SK-N-SH (cell line): ENCODE measurements at regions of chr3 and their contacts with region 1.

Region 1: GRCh38 chr3:197186887-197187588 is 111.4 kb downstream of the DLG1 start:
- DNase-seq: peak; percentile 55
- H3K4me3 ChIP-seq: no peak overlapping the region; a peak in 1 of 4 replicates
- H3K27ac ChIP-seq: peak overlapping the region in 1 of 2 experiments; percentile 80; a peak in 2 of 4 replicates
- H3K4me1 ChIP-seq: peaks cover 16 to 22% of the 10 kb centered on the region in 2 experiments; a peak in 3 of 4 replicates
- H3K27me3 ChIP-seq: no peaks in the 10 kb centered on the region
- CTCF ChIP-seq: peak; percentile 95
- EP300 ChIP-seq: no peak
- RAD21 ChIP-seq: peak; percentile 94

Region 2: DNA sequence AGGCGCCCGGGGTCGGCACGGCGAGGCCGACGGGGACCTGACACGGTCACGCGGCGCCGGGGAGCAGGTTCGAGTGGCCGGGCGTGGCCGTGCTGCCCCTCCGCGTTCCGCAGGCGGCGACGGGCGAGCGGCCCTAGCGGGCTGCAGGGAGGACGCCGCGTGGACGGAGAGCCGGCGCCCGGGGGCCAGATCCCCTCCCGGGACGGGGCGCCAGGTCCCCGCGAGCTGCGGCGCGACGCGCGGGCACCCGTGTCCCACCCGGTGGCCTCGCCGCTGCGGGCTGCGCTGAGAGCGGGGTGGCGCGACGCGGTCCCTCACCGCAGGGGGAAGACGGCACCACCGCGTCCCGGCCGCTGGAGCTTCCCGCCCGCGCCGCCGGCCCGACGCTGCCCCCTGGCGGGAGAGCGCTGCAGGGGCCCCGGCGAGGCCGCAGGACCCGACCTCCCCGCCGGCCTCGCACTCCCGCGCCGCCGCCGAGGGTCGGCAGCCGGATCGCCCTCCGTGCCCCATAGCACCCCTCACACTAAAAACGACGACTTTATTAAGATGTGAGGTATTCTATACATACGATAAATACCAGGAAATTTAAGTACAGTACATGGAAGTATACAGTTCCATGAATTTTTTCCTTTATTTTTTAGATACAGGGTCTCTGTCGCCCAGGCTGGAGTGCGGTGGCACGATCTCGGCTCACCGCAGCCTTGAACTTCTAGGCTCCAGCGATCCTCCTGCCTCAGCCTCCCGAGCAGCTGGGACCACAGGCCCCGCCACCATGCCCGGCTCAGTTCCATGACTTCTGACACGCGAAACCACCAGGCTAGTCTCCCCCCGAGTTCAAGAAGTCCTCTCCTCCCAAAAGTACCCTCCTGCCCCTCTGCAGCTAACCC is 217.1 kb before region 1 on chr3:
- CTCF ChIA-PET with region 1: interaction called, 16 read pairs
- POLR2A ChIA-PET with region 1: no interaction called
- DNase-seq: peak; percentile 97
- H3K4me3 ChIP-seq: peak overlapping the region; percentile 64 to 76
- H3K27ac ChIP-seq: no peak overlapping the region
- H3K4me1 ChIP-seq: peaks cover 0 to 6% of the 10 kb centered on the region in 2 experiments; a peak in 1 of 4 replicates
- H3K27me3 ChIP-seq: no peaks in the 10 kb centered on the region
- CTCF ChIP-seq: peak; percentile 65
- EP300 ChIP-seq: no peak; a peak in 1 of 4 replicates
- RAD21 ChIP-seq: peak; percentile 65

Region 3: GRCh38 chr3:197002701-197003454 is 184.2 kb before region 1 on chr3:
- CTCF ChIA-PET with region 1: interaction called, 94 read pairs
- POLR2A ChIA-PET with region 1: no interaction called
- DNase-seq: peak; percentile 98
- H3K4me3 ChIP-seq: peak overlapping the region in 1 of 2 experiments; percentile 52; a peak in 2 of 4 replicates
- H3K27ac ChIP-seq: peak overlapping the region in 1 of 2 experiments; percentile 66; a peak in 2 of 4 replicates
- H3K4me1 ChIP-seq: peaks cover 0 to 9% of the 10 kb centered on the region in 2 experiments; a peak in 1 of 4 replicates
- H3K27me3 ChIP-seq: no peaks in the 10 kb centered on the region
- CTCF ChIP-seq: peak; percentile 54
- EP300 ChIP-seq: no peak
- RAD21 ChIP-seq: peak; percentile 59

Region 4: GRCh38 chr3:197023241-197023997 is 163.6 kb before region 1 on chr3:
- CTCF ChIA-PET with region 1: interaction called, 57 read pairs
- POLR2A ChIA-PET with region 1: no interaction called
- DNase-seq: peak; percentile 51
- H3K4me3 ChIP-seq: no peak overlapping the region
- H3K27ac ChIP-seq: no peak overlapping the region
- H3K4me1 ChIP-seq: peaks cover 0 to 15% of the 10 kb centered on the region in 2 experiments; a peak in 1 of 4 replicates
- H3K27me3 ChIP-seq: no peaks in the 10 kb centered on the region
- CTCF ChIP-seq: no peak
- EP300 ChIP-seq: no peak
- RAD21 ChIP-seq: no peak

Region 5: DNA sequence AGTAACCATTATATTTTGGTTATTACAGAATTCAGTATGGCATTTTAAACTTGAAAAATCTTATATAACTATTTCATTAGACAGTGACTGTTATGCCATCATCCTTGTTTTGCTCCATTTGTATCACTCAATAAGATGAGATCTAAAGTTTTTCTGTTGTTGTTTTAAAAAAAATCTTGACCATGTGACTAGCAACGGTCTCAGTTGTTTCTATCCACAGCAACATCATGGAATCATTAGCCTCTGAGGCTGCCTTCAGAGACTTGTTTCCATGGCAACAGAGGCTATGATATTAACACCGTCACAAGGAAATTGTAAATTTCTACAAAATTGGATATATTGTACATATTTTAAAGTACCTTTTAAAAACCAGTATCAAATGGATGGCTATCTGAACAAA is 18.4 kb before region 1 on chr3:
- CTCF ChIA-PET with region 1: interaction called, 12 read pairs
- POLR2A ChIA-PET with region 1: no interaction called
- DNase-seq: peak; percentile 39
- H3K4me3 ChIP-seq: no peak overlapping the region
- H3K27ac ChIP-seq: peak overlapping the region; percentile 46 to 94; a peak in 3 of 4 replicates
- H3K4me1 ChIP-seq: peaks cover 0 to 36% of the 10 kb centered on the region in 2 experiments; a peak in 2 of 4 replicates
- H3K27me3 ChIP-seq: no peaks in the 10 kb centered on the region
- CTCF ChIP-seq: no peak
- EP300 ChIP-seq: no peak
- RAD21 ChIP-seq: no peak

Region 6: GRCh38 chr3:197260491-197261163 is 73.6 kb after region 1 on chr3:
- CTCF ChIA-PET with region 1: no interaction called
- POLR2A ChIA-PET with region 1: no interaction called
- DNase-seq: no peak
- H3K4me3 ChIP-seq: no peak overlapping the region
- H3K27ac ChIP-seq: peak overlapping the region in 1 of 2 experiments; percentile 14; a peak in 2 of 4 replicates
- H3K4me1 ChIP-seq: peaks cover 2 to 6% of the 10 kb centered on the region in 2 experiments; a peak in 3 of 4 replicates
- H3K27me3 ChIP-seq: no peaks in the 10 kb centered on the region
- CTCF ChIP-seq: no peak
- EP300 ChIP-seq: no peak
- RAD21 ChIP-seq: no peak